GM12878 (cell line): ENCODE measurements at regions of chr3 and their contacts with region 1.

Region 1: GRCh38 chr3:194682694-194683310 is 2.9 kb upstream of the FAM43A start:
- DNase-seq: no peak
- ATAC-seq: peak; percentile 86
- H3K4me3 ChIP-seq: no peak overlapping the region
- H3K27ac ChIP-seq: no peak overlapping the region
- H3K4me1 ChIP-seq: peaks cover 36% of the 10 kb centered on the region
- H3K27me3 ChIP-seq: peaks cover 0 to 5% of the 10 kb centered on the region in 2 experiments; a peak in 2 of 4 replicates
- CTCF ChIP-seq: peak; percentile 88 to 97 (median 94); a peak in 5 of 6 replicates
- EP300 ChIP-seq: no peak
- POLR2A ChIP-seq: no peak
- RAD21 ChIP-seq: peak; percentile 95

Region 2: GRCh38 chr3:194671900-194672808 is 10.6 kb before region 1 on chr3 and contains the start of gene LSG1:
- CTCF ChIA-PET with region 1: interaction called, 96 read pairs
- POLR2A ChIA-PET with region 1: interaction called, 4 read pairs
- RAD21 ChIA-PET with region 1: interaction called, 69 read pairs
- SMC1A ChIA-PET with region 1: interaction called, 41 read pairs
- in situ Hi-C with region 1: no loop called
- intact Hi-C with region 1: no loop called
- DNase-seq: peak; percentile 76
- ATAC-seq: peak; percentile 94
- H3K4me3 ChIP-seq: peak within 1 kb of the TSS; percentile 93
- H3K27ac ChIP-seq: peak within 1 kb of the TSS; percentile 96
- H3K4me1 ChIP-seq: peaks cover 21% of the 10 kb centered on the region
- H3K27me3 ChIP-seq: no peaks in the 10 kb centered on the region
- CTCF ChIP-seq: no peak
- EP300 ChIP-seq: no peak
- POLR2A ChIP-seq: peak; percentile 79
- RAD21 ChIP-seq: no peak
- polyA plus RNA-seq, gene LSG1: 14.3 to 23.5 TPM

Region 3: DNA sequence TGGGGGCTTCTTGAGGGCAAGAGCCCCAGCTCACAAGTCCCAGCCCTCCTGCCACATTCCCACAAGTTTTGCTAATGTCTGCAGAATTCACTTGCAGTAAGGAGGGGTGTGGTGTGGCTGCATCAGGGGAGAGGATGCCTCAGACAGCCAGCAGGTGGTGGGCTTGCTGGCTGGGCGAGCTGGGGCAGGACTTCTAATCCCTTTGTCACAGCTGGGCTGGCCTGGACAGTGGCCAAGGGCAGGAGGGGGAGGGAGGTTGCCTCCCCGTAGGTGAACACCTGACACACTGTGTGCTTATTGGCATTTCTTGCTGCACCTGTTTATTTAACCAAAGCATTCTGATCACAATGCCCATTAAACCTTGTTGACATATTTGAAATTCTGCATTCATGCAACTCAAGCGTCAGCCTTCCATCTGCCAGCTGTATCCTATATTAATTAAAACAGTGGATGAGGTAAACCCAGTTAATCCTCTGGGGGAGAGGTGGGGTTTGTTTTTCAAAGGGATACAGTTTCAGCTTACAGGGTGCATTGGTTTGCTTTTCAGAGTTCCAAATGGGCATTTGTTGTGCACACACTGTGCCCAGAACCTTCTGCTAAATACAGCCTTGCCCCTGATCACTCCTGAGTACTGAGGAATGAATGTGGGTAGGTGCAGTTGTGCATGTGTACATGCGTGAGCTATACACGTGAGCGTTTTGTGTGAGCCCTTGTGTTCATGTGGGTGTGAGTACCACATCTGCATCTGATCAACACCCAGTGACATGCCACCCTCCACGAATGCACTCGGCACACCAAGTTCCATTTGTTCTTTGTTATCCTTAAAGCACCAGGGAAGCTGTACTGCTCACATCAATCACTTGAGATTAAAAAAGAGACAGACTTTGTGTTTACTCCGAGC is 319.4 kb after region 1 on chr3:
- CTCF ChIA-PET with region 1: interaction called, 16 read pairs
- POLR2A ChIA-PET with region 1: no interaction called
- RAD21 ChIA-PET with region 1: interaction called, 3 read pairs
- SMC1A ChIA-PET with region 1: interaction called, 4 read pairs
- in situ Hi-C with region 1: no loop called
- intact Hi-C with region 1: loop called (anchors 1 kb)
- DNase-seq: peak; percentile 4
- ATAC-seq: peak; percentile 95
- H3K4me3 ChIP-seq: no peak overlapping the region
- H3K27ac ChIP-seq: no peak overlapping the region
- H3K4me1 ChIP-seq: no peaks in the 10 kb centered on the region
- H3K27me3 ChIP-seq: peaks cover 2% of the 10 kb centered on the region in 2 experiments; a peak in 1 of 4 replicates
- CTCF ChIP-seq: peak; percentile 66 to 81 (median 77)
- EP300 ChIP-seq: no peak
- POLR2A ChIP-seq: no peak
- RAD21 ChIP-seq: peak; percentile 74

Region 4: GRCh38 chr3:195106418-195106906 is 423.7 kb after region 1 on chr3:
- CTCF ChIA-PET with region 1: interaction called, 61 read pairs
- POLR2A ChIA-PET with region 1: no interaction called
- RAD21 ChIA-PET with region 1: interaction called, 36 read pairs
- SMC1A ChIA-PET with region 1: interaction called, 23 read pairs
- in situ Hi-C with region 1: no loop called
- intact Hi-C with region 1: loop called (anchors 1 kb)
- DNase-seq: no peak
- ATAC-seq: peak; percentile 99
- H3K4me3 ChIP-seq: no peak overlapping the region
- H3K27ac ChIP-seq: no peak overlapping the region
- H3K4me1 ChIP-seq: no peaks in the 10 kb centered on the region; the same call in 1 of the 2 replicates
- H3K27me3 ChIP-seq: no peaks in the 10 kb centered on the region
- CTCF ChIP-seq: peak; percentile 92 to 99 (median 95)
- EP300 ChIP-seq: no peak
- POLR2A ChIP-seq: no peak
- RAD21 ChIP-seq: peak; percentile 93

Region 5: DNA sequence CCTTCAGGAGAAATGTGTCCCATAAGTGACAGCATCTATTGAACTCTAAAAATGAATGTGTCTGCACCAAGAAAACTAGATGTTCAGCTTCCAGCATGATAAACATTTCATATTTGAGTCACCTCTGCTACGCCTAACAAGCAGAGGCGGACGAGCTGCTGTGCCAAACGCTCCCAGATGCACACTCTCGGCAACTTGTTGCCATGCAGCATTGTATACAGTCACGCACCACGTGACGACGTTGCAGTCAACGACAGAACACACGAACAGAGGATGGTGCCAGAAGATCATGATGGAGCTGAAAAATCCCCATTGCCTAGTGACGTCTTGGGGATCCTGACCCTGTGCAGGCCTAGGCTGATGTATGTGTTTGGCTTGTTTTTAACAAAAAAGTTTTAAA is 450.7 kb after region 1 on chr3:
- CTCF ChIA-PET with region 1: interaction called, 10 read pairs
- POLR2A ChIA-PET with region 1: no interaction called
- RAD21 ChIA-PET with region 1: interaction called, 6 read pairs
- SMC1A ChIA-PET with region 1: interaction called, 7 read pairs
- in situ Hi-C with region 1: loop called (anchors 10 kb)
- intact Hi-C with region 1: no loop called
- DNase-seq: no peak
- ATAC-seq: no peak
- H3K4me3 ChIP-seq: no peak overlapping the region
- H3K27ac ChIP-seq: peak overlapping the region; percentile 38; the same call in 1 of the 2 replicates
- H3K4me1 ChIP-seq: peaks cover 43% of the 10 kb centered on the region
- H3K27me3 ChIP-seq: no peaks in the 10 kb centered on the region
- CTCF ChIP-seq: no peak; a peak in 1 of 6 replicates
- EP300 ChIP-seq: no peak
- POLR2A ChIP-seq: peak; percentile 50; the same call in 1 of the 2 replicates
- RAD21 ChIP-seq: peak; percentile 44; the same call in 1 of the 2 replicates

Region 6: GRCh38 chr3:195250473-195251251 is 567.9 kb after region 1 on chr3:
- CTCF ChIA-PET with region 1: interaction called, 35 read pairs
- POLR2A ChIA-PET with region 1: no interaction called
- RAD21 ChIA-PET with region 1: interaction called, 25 read pairs
- SMC1A ChIA-PET with region 1: interaction called, 15 read pairs
- in situ Hi-C with region 1: no loop called
- intact Hi-C with region 1: no loop called
- DNase-seq: no peak
- ATAC-seq: peak; percentile 76
- H3K4me3 ChIP-seq: no peak overlapping the region
- H3K27ac ChIP-seq: peak overlapping the region; percentile 23
- H3K4me1 ChIP-seq: peaks cover 25% of the 10 kb centered on the region
- H3K27me3 ChIP-seq: no peaks in the 10 kb centered on the region
- CTCF ChIP-seq: peak; percentile 39 to 60 (median 42); a peak in 5 of 6 replicates
- EP300 ChIP-seq: no peak
- POLR2A ChIP-seq: no peak
- RAD21 ChIP-seq: peak; percentile 55

Region 7: GRCh38 chr3:195265363-195265976 is 582.7 kb after region 1 on chr3:
- CTCF ChIA-PET with region 1: interaction called, 44 read pairs
- POLR2A ChIA-PET with region 1: interaction called, 4 read pairs
- RAD21 ChIA-PET with region 1: interaction called, 41 read pairs
- SMC1A ChIA-PET with region 1: interaction called, 34 read pairs
- in situ Hi-C with region 1: no loop called
- intact Hi-C with region 1: loop called (anchors 1 kb)
- DNase-seq: no peak
- ATAC-seq: no peak
- H3K4me3 ChIP-seq: no peak overlapping the region
- H3K27ac ChIP-seq: no peak overlapping the region
- H3K4me1 ChIP-seq: peaks cover 13% of the 10 kb centered on the region
- H3K27me3 ChIP-seq: no peaks in the 10 kb centered on the region
- CTCF ChIP-seq: no peak
- EP300 ChIP-seq: no peak
- POLR2A ChIP-seq: no peak
- RAD21 ChIP-seq: no peak